Naive thymus-derived CD4-positive, alpha-beta T cell (primary cell): ENCODE measurements at regions of chr9 and their contacts with region 1.

Region 1: DNA sequence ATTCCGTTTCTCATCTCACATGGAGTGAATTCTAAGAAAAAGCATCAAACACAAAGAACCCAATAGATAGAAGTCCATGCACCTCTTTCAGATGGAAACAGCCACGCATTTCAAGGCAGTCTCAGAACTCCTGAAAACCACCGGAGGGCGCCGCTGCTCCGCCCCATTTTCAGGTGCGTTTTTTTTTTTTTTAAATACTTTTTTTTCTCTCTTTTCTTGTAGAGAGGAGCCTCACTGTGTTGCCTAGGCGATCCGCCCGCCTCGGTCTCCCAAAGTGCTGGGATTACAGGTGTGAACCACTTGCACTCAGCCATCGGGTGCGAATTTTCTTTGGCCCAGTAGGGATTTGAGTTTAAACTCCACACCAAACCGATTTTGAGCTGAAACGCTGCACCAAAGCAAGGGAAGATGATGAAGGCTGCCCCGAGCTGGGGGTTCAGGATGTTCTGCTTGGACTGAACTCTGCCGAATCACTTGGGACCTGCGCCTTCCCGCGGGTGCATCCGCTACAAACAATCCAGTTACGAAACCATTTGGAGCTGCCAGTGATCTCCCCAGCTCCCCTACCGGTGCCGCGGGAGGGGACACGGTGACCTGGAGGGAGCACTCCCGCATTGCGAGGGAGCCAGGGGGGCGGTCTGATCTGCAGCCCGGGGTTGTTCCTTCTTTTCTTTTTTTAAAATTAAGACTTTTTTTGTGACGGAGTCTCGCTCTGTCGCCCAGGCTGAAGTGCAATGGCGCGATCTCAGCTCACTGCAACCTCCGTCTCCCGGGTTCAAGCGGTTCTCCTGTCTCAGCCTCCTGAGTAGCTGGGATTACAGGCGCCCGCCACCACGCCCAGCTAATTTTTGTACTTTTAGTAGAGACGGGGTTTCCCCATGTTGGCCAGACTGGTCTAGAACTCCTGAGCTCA is 1.4 kb downstream of the PTGR1 start:
- DNase-seq: peak; percentile 40 to 77 (median 65)
- ATAC-seq: peak; percentile 82
- H3K4me3 ChIP-seq: peak overlapping the region; percentile 33
- H3K4me3 Mint-ChIP-seq: peak overlapping the region; percentile 77 to 94 (median 89)
- H3K27ac ChIP-seq: no peak overlapping the region
- H3K27ac Mint-ChIP-seq: peak overlapping the region in 4 of 9 donors; percentile 2 to 62 (median 42)
- H3K4me1 ChIP-seq: peaks cover 12 to 15% of the 10 kb centered on the region in 2 donors
- H3K4me1 Mint-ChIP-seq: peaks cover 13 to 29% (median 24%) of the 10 kb centered on the region in 7 donors
- H3K27me3 ChIP-seq: peaks cover 0 to 9% of the 10 kb centered on the region in 2 donors
- H3K27me3 Mint-ChIP-seq: peaks cover 17 to 42% (median 29%) of the 10 kb centered on the region in 5 donors

Region 2: DNA sequence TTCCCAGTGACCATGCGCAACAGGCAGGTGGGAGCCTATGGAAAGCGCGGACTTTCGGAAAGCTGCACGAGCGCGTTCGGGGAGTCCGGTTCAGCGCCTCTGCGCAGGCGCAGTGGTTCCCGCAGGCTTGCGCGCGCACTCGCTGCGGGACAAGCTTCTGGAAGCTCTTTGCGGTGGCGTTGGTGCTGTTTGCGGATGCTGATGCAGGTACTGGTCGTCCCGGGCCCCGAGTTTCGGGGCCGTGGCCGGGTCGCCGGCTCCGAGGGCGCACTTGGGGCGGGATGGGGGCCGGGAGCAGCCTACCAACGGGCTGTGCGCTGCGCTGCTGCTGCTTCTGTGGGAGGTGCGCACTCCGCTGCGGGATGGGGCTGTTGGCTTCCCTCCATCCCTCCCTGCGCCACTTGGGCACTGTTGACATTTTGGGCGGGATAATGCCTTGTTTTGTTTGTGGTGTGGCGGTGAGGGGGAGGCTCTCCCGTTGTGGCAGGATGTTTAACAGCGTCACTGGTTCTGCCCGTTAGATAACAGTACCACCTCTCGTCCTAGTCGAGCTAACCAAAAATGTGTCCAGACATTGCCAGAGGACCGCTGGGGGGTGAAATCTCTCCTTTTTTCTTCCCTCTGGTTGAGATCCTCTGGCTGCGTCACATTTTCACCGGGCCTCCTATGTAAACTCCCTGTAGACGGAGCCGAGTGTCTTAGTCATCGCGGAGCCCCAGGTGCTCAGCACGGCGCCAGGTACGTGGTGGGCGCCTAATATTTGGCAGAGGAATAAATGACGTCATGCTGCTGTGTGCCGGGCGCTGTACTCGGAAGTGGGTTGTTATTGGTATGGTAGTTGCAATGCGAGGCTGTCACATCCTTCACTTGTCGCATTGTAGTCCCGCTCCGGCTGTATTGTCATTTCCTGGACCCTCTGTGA is 72.8 kb before region 1 on chr9 and contains the start of gene ZNF483:
- CTCF ChIA-PET with region 1: no interaction called
- POLR2A ChIA-PET with region 1: interaction called, 3 read pairs
- intact Hi-C with region 1: loop called in 1 of 2 experiments (anchors 5 kb)
- DNase-seq: peak; percentile 60 to 89 (median 75)
- ATAC-seq: peak; percentile 90
- H3K4me3 ChIP-seq: peak within 1 kb of the TSS; percentile 84
- H3K4me3 Mint-ChIP-seq: peak within 1 kb of the TSS; percentile 86 to 98 (median 92)
- H3K27ac ChIP-seq: peak within 1 kb of the TSS; percentile 86
- H3K27ac Mint-ChIP-seq: peak within 1 kb of the TSS; percentile 90 to 99 (median 96)
- H3K4me1 ChIP-seq: peaks cover 4 to 6% of the 10 kb centered on the region in 2 donors
- H3K4me1 Mint-ChIP-seq: peaks cover 16 to 31% (median 21%) of the 10 kb centered on the region in 7 donors
- H3K27me3 ChIP-seq: no peaks in the 10 kb centered on the region
- H3K27me3 Mint-ChIP-seq: peaks cover 0 to 15% (median 5%) of the 10 kb centered on the region in 5 donors
- total RNA-seq, gene ZNF483: 3.0 to 37.1 (median 16.0) TPM

Region 3: GRCh38 chr9:111631071-111631971 is 33.2 kb after region 1 on chr9 and contains the start of gene DNAJC25:
- CTCF ChIA-PET with region 1: interaction called, 5 read pairs
- POLR2A ChIA-PET with region 1: interaction called, 3 read pairs
- intact Hi-C with region 1: loop called (anchors 1 to 2 kb)
- DNase-seq: peak; percentile 94 to 98 (median 97)
- ATAC-seq: peak; percentile 97
- H3K4me3 ChIP-seq: peak within 1 kb of the TSS; percentile 82
- H3K4me3 Mint-ChIP-seq: peak within 1 kb of the TSS; percentile 81 to 99 (median 94)
- H3K27ac ChIP-seq: peak within 1 kb of the TSS; percentile 83
- H3K27ac Mint-ChIP-seq: peak within 1 kb of the TSS; percentile 78 to 95 (median 89)
- H3K4me1 ChIP-seq: peaks cover 14 to 21% of the 10 kb centered on the region in 2 donors
- H3K4me1 Mint-ChIP-seq: peaks cover 29 to 57% (median 47%) of the 10 kb centered on the region in 7 donors
- H3K27me3 ChIP-seq: no peaks in the 10 kb centered on the region
- H3K27me3 Mint-ChIP-seq: no peaks in the 10 kb centered on the region
- total RNA-seq, gene DNAJC25: 4.0 to 6.0 (median 5.2) TPM

Region 4: DNA sequence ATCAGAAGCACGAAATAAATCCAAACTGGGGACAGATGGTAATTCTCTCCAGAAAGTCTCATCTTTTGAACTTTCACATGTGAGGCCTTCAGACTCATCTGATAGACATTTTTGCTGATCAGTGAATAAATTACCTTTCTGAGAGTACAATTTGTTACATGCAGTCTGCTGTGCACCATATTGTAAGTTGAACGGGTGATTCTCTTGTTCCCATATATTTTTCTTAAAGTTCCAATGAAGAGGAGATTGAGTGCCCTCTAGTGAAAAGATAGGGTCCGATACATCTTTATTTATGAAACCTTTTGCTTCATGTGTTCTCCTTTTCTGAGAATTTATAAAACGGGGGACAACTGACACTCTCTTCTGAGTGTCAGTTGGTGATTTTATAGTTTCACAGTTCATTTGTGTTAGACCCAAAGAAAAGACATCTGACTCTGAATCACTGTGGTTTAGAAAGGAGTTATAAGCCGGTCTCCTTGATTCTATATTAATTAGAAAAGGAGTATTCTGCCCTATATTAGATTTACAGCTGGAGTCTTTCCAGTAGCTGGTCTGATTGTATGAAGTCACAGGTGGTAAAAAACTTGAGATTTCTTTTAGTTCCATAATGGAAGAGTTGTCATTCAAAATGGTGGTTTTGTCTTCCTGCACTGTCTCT is 93.7 kb after region 1 on chr9:
- CTCF ChIA-PET with region 1: interaction called, 16 read pairs
- POLR2A ChIA-PET with region 1: no interaction called
- intact Hi-C with region 1: loop called (anchors 1 kb)
- DNase-seq: peak in 5 of 9 donors; percentile 8 to 34 (median 11)
- ATAC-seq: no peak
- H3K4me3 ChIP-seq: no peak overlapping the region
- H3K4me3 Mint-ChIP-seq: no peak overlapping the region
- H3K27ac ChIP-seq: no peak overlapping the region
- H3K27ac Mint-ChIP-seq: no peak overlapping the region
- H3K4me1 ChIP-seq: no peaks in the 10 kb centered on the region
- H3K4me1 Mint-ChIP-seq: peaks cover 0 to 5% (median 0%) of the 10 kb centered on the region in 7 donors
- H3K27me3 ChIP-seq: no peaks in the 10 kb centered on the region
- H3K27me3 Mint-ChIP-seq: no peaks in the 10 kb centered on the region

Region 5: GRCh38 chr9:111759762-111760639 is 161.9 kb after region 1 on chr9:
- CTCF ChIA-PET with region 1: interaction called, 5 read pairs
- POLR2A ChIA-PET with region 1: no interaction called
- intact Hi-C with region 1: loop called in 1 of 2 experiments (anchors 1 kb)
- DNase-seq: peak in 8 of 9 donors; percentile 25 to 77 (median 68)
- ATAC-seq: peak; percentile 82
- H3K4me3 ChIP-seq: no peak overlapping the region
- H3K4me3 Mint-ChIP-seq: no peak overlapping the region
- H3K27ac ChIP-seq: no peak overlapping the region
- H3K27ac Mint-ChIP-seq: no peak overlapping the region
- H3K4me1 ChIP-seq: no peaks in the 10 kb centered on the region
- H3K4me1 Mint-ChIP-seq: peaks cover 3 to 8% (median 5%) of the 10 kb centered on the region in 7 donors
- H3K27me3 ChIP-seq: no peaks in the 10 kb centered on the region
- H3K27me3 Mint-ChIP-seq: no peaks in the 10 kb centered on the region

Region 6: DNA sequence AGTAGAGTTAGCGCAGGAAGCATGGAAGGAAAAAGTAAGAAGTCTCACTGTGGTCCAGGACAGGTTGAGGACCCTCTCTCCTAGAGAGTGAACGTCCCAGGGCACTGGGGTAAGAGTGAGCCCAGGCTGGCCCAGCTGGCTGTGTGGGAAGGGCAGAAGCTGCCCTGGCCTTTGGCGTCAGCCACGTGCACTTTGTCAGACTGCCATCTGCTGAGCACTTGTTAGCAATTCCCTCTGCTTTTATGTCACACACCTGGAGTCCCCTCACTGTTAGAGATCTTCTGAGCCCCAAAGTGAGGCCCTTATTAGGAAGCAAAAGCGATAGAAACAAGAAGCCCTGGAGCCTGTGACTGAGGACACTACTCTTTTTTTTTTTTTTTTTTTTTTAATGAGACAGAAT is 377.6 kb after region 1 on chr9:
- CTCF ChIA-PET with region 1: no interaction called
- POLR2A ChIA-PET with region 1: no interaction called
- intact Hi-C with region 1: loop called in 1 of 2 experiments (anchors 5 kb)
- DNase-seq: peak in 2 of 9 donors; percentile 9 to 14
- ATAC-seq: peak; percentile 47
- H3K4me3 ChIP-seq: no peak overlapping the region
- H3K4me3 Mint-ChIP-seq: no peak overlapping the region
- H3K27ac ChIP-seq: no peak overlapping the region
- H3K27ac Mint-ChIP-seq: no peak overlapping the region
- H3K4me1 ChIP-seq: no peaks in the 10 kb centered on the region
- H3K4me1 Mint-ChIP-seq: peaks cover 2 to 20% (median 10%) of the 10 kb centered on the region in 7 donors
- H3K27me3 ChIP-seq: no peaks in the 10 kb centered on the region
- H3K27me3 Mint-ChIP-seq: peaks cover 0 to 13% (median 0%) of the 10 kb centered on the region in 5 donors

Region 7: GRCh38 chr9:112361601-112362000 is 763.5 kb after region 1 on chr9:
- CTCF ChIA-PET with region 1: no interaction called
- POLR2A ChIA-PET with region 1: no interaction called
- intact Hi-C with region 1: loop called in 1 of 2 experiments (anchors 1 kb)
- DNase-seq: peak in 7 of 9 donors; percentile 16 to 51 (median 40)
- ATAC-seq: peak; percentile 60
- H3K4me3 ChIP-seq: no peak overlapping the region
- H3K4me3 Mint-ChIP-seq: no peak overlapping the region
- H3K27ac ChIP-seq: no peak overlapping the region
- H3K27ac Mint-ChIP-seq: no peak overlapping the region
- H3K4me1 ChIP-seq: peaks cover 0 to 4% of the 10 kb centered on the region in 2 donors
- H3K4me1 Mint-ChIP-seq: peaks cover 0 to 4% (median 0%) of the 10 kb centered on the region in 7 donors
- H3K27me3 ChIP-seq: no peaks in the 10 kb centered on the region
- H3K27me3 Mint-ChIP-seq: peaks cover 0 to 22% (median 9%) of the 10 kb centered on the region in 5 donors

Region 8: DNA sequence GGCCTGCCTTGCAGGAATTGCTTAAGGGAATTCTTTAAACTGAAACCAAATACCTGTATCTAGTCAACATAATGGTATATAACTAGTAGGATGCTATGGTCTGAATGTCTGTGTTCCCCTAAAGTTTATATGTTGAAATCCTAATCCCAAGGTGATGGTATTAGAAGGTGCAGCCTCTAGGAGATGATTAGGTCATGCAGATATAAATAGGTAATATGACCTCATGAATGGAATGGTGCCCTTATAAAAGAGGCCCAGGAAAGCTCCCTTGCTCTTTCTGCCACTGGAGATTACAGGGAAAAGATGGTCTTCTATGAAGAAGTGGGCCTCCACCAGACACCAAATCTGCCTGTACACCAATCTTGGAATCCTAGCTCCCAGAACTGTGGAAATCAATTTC is 881.1 kb after region 1 on chr9:
- CTCF ChIA-PET with region 1: no interaction called
- POLR2A ChIA-PET with region 1: no interaction called
- intact Hi-C with region 1: no loop called
- DNase-seq: no peak
- ATAC-seq: no peak
- H3K4me3 ChIP-seq: no peak overlapping the region
- H3K4me3 Mint-ChIP-seq: no peak overlapping the region
- H3K27ac ChIP-seq: no peak overlapping the region
- H3K27ac Mint-ChIP-seq: no peak overlapping the region
- H3K4me1 ChIP-seq: no peaks in the 10 kb centered on the region
- H3K4me1 Mint-ChIP-seq: peaks cover 0 to 1% (median 0%) of the 10 kb centered on the region in 7 donors
- H3K27me3 ChIP-seq: no peaks in the 10 kb centered on the region
- H3K27me3 Mint-ChIP-seq: no peaks in the 10 kb centered on the region

Region 9: GRCh38 chr9:112725961-112726360 is 1127.9 kb after region 1 on chr9:
- CTCF ChIA-PET with region 1: no interaction called
- POLR2A ChIA-PET with region 1: no interaction called
- intact Hi-C with region 1: no loop called
- DNase-seq: no peak
- ATAC-seq: no peak
- H3K4me3 ChIP-seq: no peak overlapping the region
- H3K4me3 Mint-ChIP-seq: no peak overlapping the region
- H3K27ac ChIP-seq: no peak overlapping the region
- H3K27ac Mint-ChIP-seq: no peak overlapping the region
- H3K4me1 ChIP-seq: no peaks in the 10 kb centered on the region
- H3K4me1 Mint-ChIP-seq: peaks cover 0 to 2% (median 0%) of the 10 kb centered on the region in 7 donors
- H3K27me3 ChIP-seq: no peaks in the 10 kb centered on the region
- H3K27me3 Mint-ChIP-seq: peaks cover 0 to 4% (median 0%) of the 10 kb centered on the region in 5 donors